Activated B cell treated with CpG ODN at 0.5 μM for 24 hours (primary cell): ENCODE measurements at regions of chr6 and their contacts with region 1.

Region 1: GRCh38 chr6:15901141-15902115 is 227.5 kb upstream of the MYLIP start:
- DNase-seq: peak; percentile 39
- ATAC-seq: peak; percentile 80
- H3K4me3 Mint-ChIP-seq: peak overlapping the region; percentile 80
- H3K27ac Mint-ChIP-seq: peak overlapping the region; percentile 98
- H3K4me1 Mint-ChIP-seq: peaks cover 83% of the 10 kb centered on the region
- H3K27me3 Mint-ChIP-seq: no peaks in the 10 kb centered on the region
- CTCF ChIP-seq: no peak

Region 2: GRCh38 chr6:15662326-15663129 is 238.9 kb before region 1 on chr6 and contains the start of gene DTNBP1:
- CTCF ChIA-PET with region 1: no interaction called
- POLR2A ChIA-PET with region 1: interaction called, 4 read pairs
- intact Hi-C with region 1: loop called (anchors 1 kb)
- DNase-seq: peak; percentile 94
- ATAC-seq: peak; percentile 73
- H3K4me3 Mint-ChIP-seq: peak within 1 kb of the TSS; percentile 87
- H3K27ac Mint-ChIP-seq: peak within 1 kb of the TSS; percentile 89
- H3K4me1 Mint-ChIP-seq: peaks cover 49% of the 10 kb centered on the region
- H3K27me3 Mint-ChIP-seq: no peaks in the 10 kb centered on the region
- CTCF ChIP-seq: no peak
- total RNA-seq, gene DTNBP1: 50.3 and 51.6 TPM in 2 replicates

Region 3: DNA sequence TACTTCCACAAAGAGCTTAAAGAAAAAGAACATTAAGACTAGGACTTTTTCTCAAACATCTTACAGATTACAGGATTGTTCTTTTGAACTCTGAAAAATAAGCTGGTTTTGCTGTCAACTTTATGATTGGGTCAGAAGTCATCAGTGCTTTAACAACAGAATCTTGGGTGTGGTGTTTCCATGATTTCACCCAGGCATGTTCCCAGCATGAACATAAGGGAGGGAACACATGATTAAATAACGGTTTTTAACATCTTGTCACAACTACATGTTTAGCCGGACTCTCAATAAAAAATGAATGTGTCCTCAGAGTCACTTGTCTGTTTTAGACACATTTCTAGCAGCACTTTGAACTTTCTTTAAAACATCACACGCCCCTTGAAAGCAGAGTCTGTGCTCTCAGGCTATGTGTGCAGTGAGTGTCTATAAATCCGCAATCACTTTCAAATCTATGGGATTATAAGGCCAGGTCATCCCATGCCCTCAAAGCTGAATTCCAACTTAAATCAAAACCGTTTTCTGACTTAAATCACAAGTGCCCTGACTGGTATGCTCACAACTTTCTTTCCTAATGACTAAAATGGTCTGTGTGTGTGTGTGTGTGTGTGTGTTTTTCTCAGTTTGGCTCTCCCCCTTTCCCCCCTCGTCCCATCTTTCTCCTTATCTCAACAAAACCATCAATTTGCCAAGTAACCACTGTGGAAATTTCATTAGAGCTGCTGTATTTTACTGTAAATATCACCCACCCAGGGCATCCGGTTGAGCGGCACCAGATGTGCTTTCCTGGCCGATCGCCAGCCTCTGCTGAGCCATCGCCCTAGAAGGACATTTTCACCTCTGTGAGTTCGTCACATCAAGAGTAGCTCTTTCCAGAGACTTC is 21.8 kb before region 1 on chr6:
- CTCF ChIA-PET with region 1: interaction called, 5 read pairs
- POLR2A ChIA-PET with region 1: interaction called, 14 read pairs
- intact Hi-C with region 1: loop called (anchors 1 kb)
- DNase-seq: peak; percentile 30
- ATAC-seq: peak; percentile 73
- H3K4me3 Mint-ChIP-seq: peak overlapping the region; percentile 4
- H3K27ac Mint-ChIP-seq: peak overlapping the region; percentile 19
- H3K4me1 Mint-ChIP-seq: peaks cover 45% of the 10 kb centered on the region
- H3K27me3 Mint-ChIP-seq: no peaks in the 10 kb centered on the region
- CTCF ChIP-seq: no peak

Region 4: GRCh38 chr6:15936503-15936902 is 35.1 kb after region 1 on chr6:
- CTCF ChIA-PET with region 1: no interaction called
- POLR2A ChIA-PET with region 1: interaction called, 3 read pairs
- intact Hi-C with region 1: loop called (anchors 1 kb)
- DNase-seq: no peak
- ATAC-seq: peak; percentile 96
- H3K4me3 Mint-ChIP-seq: no peak overlapping the region
- H3K27ac Mint-ChIP-seq: peak overlapping the region; percentile 46
- H3K4me1 Mint-ChIP-seq: peaks cover 15% of the 10 kb centered on the region
- H3K27me3 Mint-ChIP-seq: no peaks in the 10 kb centered on the region
- CTCF ChIP-seq: no peak

Region 5: DNA sequence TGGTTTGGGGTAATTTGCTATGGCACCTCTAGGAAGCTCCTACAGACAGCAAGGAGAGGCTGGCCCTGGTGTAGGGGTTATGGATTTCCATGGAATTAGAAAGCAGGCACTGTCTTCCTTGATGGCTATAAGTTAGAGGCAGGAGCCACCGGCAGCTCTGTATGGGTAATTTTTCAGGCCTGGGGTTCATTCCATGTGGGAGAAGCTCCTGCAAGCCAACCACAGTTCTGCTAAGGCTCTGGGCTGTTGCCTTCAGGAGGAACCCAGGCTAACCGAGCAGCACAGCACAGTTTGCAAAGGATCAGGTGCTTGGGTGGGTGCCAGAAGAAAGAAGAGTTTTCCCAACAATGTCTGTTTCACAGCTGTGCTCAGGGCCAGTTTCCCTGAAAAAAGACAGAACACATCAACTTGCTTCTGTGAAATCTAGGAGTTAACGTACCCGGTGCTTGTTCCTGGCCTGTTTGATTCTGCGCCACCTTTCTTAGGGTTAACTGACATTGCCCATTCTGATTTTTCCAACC is 64.6 kb after region 1 on chr6:
- CTCF ChIA-PET with region 1: no interaction called
- POLR2A ChIA-PET with region 1: no interaction called
- intact Hi-C with region 1: no loop called
- DNase-seq: no peak
- ATAC-seq: no peak
- H3K4me3 Mint-ChIP-seq: no peak overlapping the region
- H3K27ac Mint-ChIP-seq: no peak overlapping the region
- H3K4me1 Mint-ChIP-seq: no peaks in the 10 kb centered on the region
- H3K27me3 Mint-ChIP-seq: no peaks in the 10 kb centered on the region
- CTCF ChIP-seq: no peak

Region 6: DNA sequence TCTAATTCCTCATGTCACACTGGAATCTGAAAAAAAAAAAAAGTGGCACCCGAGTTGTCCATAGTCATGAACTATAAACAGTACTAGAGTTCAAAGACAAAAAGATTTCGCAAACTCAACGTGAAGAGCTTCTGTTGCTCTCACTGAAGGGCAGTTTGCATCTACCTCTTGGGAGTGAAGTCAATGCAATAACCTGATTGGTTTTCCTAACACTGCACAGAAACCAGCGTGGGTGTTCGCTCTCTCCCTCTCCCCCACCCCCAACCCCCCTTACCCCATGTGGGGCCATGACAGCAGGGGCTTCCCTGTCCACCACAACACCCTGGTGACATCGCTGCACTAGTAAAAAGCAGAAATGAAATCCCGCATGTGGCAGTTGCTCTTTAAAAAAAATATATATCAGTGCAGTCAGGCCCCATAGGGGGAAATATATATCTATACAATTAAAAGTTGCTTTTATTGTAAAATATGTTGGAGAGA is 403.9 kb after region 1 on chr6:
- CTCF ChIA-PET with region 1: no interaction called
- POLR2A ChIA-PET with region 1: no interaction called
- intact Hi-C with region 1: loop called (anchors 5 kb)
- DNase-seq: peak; percentile 37
- ATAC-seq: peak; percentile 96
- H3K4me3 Mint-ChIP-seq: peak overlapping the region; percentile 82
- H3K27ac Mint-ChIP-seq: peak overlapping the region; percentile 65
- H3K4me1 Mint-ChIP-seq: peaks cover 36% of the 10 kb centered on the region
- H3K27me3 Mint-ChIP-seq: no peaks in the 10 kb centered on the region
- CTCF ChIP-seq: no peak

Region 7: GRCh38 chr6:17093686-17094085 is 1192.3 kb after region 1 on chr6:
- CTCF ChIA-PET with region 1: no interaction called
- POLR2A ChIA-PET with region 1: no interaction called
- intact Hi-C with region 1: no loop called
- DNase-seq: no peak
- ATAC-seq: no peak
- H3K4me3 Mint-ChIP-seq: no peak overlapping the region
- H3K27ac Mint-ChIP-seq: no peak overlapping the region
- H3K4me1 Mint-ChIP-seq: no peaks in the 10 kb centered on the region
- H3K27me3 Mint-ChIP-seq: peaks cover 14% of the 10 kb centered on the region
- CTCF ChIP-seq: no peak